ENCODE measurements at regions of chr19 and their contacts with region 1.

Region 1: DNA sequence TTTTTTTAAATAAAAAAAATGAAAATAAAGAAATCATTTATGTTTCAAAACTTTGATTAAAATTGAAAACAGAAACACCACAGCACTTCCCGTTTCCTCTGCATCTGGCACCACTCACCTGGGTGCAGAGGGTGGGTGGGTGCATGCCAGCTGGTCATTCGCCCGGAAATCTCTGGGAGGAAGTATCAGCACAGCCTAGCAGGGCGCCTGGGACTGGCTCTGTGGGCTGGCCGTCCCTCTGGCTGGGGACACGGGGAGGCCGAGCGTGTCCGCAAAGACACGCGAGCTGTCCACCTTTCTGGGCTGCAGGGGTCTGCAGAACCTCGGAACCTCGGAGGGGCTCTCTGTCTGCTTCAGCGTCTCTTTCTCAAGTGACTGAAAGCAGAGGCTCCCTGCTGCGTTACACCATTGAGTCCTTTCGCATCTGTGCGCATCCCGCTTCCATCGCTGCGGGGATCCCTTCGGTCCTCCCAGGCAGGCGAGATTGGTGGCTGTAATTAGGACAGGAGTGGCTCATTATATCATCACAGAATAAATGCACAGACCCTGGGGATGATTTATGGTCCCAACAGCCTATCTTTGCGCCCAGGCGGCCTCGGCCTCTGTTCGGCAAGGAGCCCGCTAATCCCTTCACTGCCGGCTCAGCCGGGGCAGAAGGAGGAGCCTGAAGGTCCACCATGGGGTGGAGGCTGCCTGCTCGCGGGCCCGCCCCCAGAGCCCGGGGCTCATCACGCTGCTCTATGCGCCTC is 17.2 kb downstream of the CRTC1 start:
- DNase-seq: no peak
- H3K4me3 ChIP-seq: peak overlapping the region; percentile 30 to 46
- H3K27ac ChIP-seq: peak overlapping the region; percentile 68
- H3K4me1 ChIP-seq: peaks cover 23% of the 10 kb centered on the region
- H3K27me3 ChIP-seq: no peaks in the 10 kb centered on the region
- CTCF ChIP-seq: no peak
- POLR2A ChIP-seq: no peak

Region 2: GRCh38 chr19:19900729-19901444 is 1200.2 kb after region 1 on chr19 and contains the start of gene ZNF93:
- intact Hi-C with region 1: loop called (anchors 10 kb)
- DNase-seq: peak; percentile 97
- H3K4me3 ChIP-seq: peak within 1 kb of the TSS; percentile 70 to 86
- H3K27ac ChIP-seq: peak within 1 kb of the TSS; percentile 82
- H3K4me1 ChIP-seq: peaks cover 13% of the 10 kb centered on the region
- H3K27me3 ChIP-seq: no peaks in the 10 kb centered on the region
- CTCF ChIP-seq: no peak
- POLR2A ChIP-seq: peak in 1 of 2 donors; percentile 31
- total RNA-seq, gene ZNF93: 4.2 TPM

Measured in vagina (tissue), 2 donors.